ENCODE measurements at regions of chr5 and their contacts with region 1.

Region 1: GRCh38 chr5:59891962-59892643 is 1.4 kb downstream of the PDE4D start:
- DNase-seq: no peak
- ATAC-seq: no peak
- H3K4me3 ChIP-seq: no peak overlapping the region
- H3K27ac ChIP-seq: no peak overlapping the region
- H3K4me1 ChIP-seq: no peaks in the 10 kb centered on the region
- H3K27me3 ChIP-seq: no peaks in the 10 kb centered on the region; a peak in 1 of 5 replicates
- CTCF ChIP-seq: no peak
- EP300 ChIP-seq: no peak
- POLR2A ChIP-seq: no peak
- RAD21 ChIP-seq: no peak

Region 2: GRCh38 chr5:59685793-59686192 is 206.3 kb before region 1 on chr5:
- CTCF ChIA-PET with region 1: no interaction called
- POLR2A ChIA-PET with region 1: no interaction called
- in situ Hi-C with region 1: no loop called
- intact Hi-C with region 1: no loop called
- DNase-seq: no peak
- ATAC-seq: no peak
- H3K4me3 ChIP-seq: no peak overlapping the region
- H3K27ac ChIP-seq: no peak overlapping the region
- H3K4me1 ChIP-seq: no peaks in the 10 kb centered on the region
- H3K27me3 ChIP-seq: no peaks in the 10 kb centered on the region
- CTCF ChIP-seq: no peak
- EP300 ChIP-seq: no peak
- POLR2A ChIP-seq: no peak
- RAD21 ChIP-seq: no peak

Region 3: DNA sequence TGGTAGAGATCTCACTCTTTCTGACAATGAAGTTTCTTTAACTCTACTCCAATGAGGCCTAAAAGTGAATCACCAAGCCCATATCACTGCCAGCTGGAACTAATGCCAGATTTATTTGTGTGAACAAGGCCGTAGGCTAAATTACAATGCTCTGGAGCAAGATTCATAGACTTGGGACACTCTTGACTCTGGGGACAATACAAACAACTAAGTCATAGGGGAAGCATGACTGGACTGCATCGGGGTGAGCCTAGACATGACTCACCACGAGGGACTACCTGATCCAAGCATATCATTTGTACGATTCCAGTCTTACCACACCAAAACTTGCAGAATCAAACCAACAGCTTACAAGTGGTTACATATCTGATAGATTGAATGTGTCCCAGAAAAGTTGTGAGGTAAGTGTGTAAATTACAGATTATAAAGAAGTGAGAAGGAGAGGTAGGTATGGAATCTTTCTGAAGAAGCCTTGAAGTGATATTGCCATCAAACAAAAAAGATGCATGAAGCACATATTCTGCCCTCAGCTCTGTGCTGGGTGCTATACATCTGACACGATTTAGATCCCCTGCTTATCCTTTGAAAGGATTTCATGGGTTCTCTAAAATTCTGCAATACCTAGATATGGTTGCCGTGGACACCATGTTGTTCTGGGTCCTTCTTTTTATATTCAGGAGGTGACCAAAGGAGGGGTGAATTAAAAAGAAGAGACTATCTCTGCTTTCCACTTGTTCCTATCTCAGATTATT is 200.7 kb after region 1 on chr5:
- CTCF ChIA-PET with region 1: no interaction called
- POLR2A ChIA-PET with region 1: no interaction called
- in situ Hi-C with region 1: no loop called
- intact Hi-C with region 1: loop called (anchors 2 kb)
- DNase-seq: peak; percentile 6
- ATAC-seq: no peak
- H3K4me3 ChIP-seq: no peak overlapping the region
- H3K27ac ChIP-seq: no peak overlapping the region
- H3K4me1 ChIP-seq: no peaks in the 10 kb centered on the region
- H3K27me3 ChIP-seq: no peaks in the 10 kb centered on the region
- CTCF ChIP-seq: no peak
- EP300 ChIP-seq: no peak
- POLR2A ChIP-seq: no peak
- RAD21 ChIP-seq: no peak

Region 4: DNA sequence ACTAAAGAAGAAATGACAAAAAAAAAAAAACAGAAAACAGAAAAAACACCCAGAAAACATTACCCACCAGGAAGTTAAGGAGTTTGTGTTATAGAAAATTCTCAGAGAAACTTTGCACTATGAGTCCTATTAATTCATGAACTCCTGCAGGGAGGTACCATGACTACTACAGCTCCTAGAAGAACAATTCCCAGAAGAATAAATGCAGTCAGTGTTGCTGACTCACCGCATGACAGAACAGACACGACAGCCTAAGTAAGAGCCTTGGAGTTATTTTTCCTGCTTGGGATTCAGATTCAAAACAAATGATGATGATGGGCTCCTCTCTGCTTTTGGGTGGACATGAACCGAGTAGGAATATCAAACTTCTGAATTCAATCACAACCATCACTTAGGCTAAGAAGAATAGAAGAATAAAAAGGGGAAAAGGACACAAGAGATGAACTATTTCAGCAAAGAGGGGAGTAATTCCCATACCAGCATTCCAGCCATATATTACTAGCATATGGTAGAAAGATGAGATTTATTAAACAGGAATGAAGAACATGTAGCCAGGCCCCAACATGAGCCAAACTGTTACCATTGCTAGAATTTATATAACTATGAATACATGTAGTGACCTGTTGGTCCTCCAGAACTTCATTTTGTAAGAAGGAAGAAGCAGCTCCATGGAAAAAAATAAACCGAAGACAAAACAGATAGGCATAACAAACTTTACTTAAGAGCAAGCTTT is 211.0 kb after region 1 on chr5:
- CTCF ChIA-PET with region 1: no interaction called
- POLR2A ChIA-PET with region 1: no interaction called
- in situ Hi-C with region 1: no loop called
- intact Hi-C with region 1: loop called (anchors 5 kb)
- DNase-seq: no peak
- ATAC-seq: no peak
- H3K4me3 ChIP-seq: no peak overlapping the region
- H3K27ac ChIP-seq: no peak overlapping the region
- H3K4me1 ChIP-seq: no peaks in the 10 kb centered on the region
- H3K27me3 ChIP-seq: no peaks in the 10 kb centered on the region
- CTCF ChIP-seq: no peak
- EP300 ChIP-seq: no peak
- POLR2A ChIP-seq: no peak
- RAD21 ChIP-seq: no peak

Measured in HepG2 (cell line).